ENCODE measurements at regions of chr17 and their contacts with region 1.

Region 1: GRCh38 chr17:57833179-57833939 is 16.5 kb downstream of the MRPS23 start:
- DNase-seq: peak; percentile 64 to 80 (median 76)
- ATAC-seq: peak; percentile 63 to 87 (median 81)
- H3K4me3 ChIP-seq: peak overlapping the region in 10 of 12 donors; percentile 24 to 58 (median 48)
- H3K27ac ChIP-seq: peak overlapping the region; percentile 58 to 95 (median 82)
- H3K4me1 ChIP-seq: peaks cover 0 to 46% (median 15%) of the 10 kb centered on the region in 12 donors
- H3K27me3 ChIP-seq: no peaks in the 10 kb centered on the region
- CTCF ChIP-seq: peak; percentile 85 to 97 (median 91)
- POLR2A ChIP-seq: no peak

Region 2: GRCh38 chr17:57121338-57122042 is 711.9 kb before region 1 on chr17:
- intact Hi-C with region 1: loop called in 3 of 10 experiments (anchors 5 to 10 kb)
- DNase-seq: peak in 1 of 5 donors; percentile 41
- ATAC-seq: peak; percentile 19 to 57 (median 47)
- H3K4me3 ChIP-seq: no peak overlapping the region
- H3K27ac ChIP-seq: peak overlapping the region in 2 of 12 donors; percentile 14 to 41
- H3K4me1 ChIP-seq: peaks cover 0 to 18% (median 0%) of the 10 kb centered on the region in 12 donors
- H3K27me3 ChIP-seq: no peaks in the 10 kb centered on the region
- CTCF ChIP-seq: peak in 11 of 12 donors; percentile 12 to 61 (median 45)
- POLR2A ChIP-seq: no peak

Region 3: DNA sequence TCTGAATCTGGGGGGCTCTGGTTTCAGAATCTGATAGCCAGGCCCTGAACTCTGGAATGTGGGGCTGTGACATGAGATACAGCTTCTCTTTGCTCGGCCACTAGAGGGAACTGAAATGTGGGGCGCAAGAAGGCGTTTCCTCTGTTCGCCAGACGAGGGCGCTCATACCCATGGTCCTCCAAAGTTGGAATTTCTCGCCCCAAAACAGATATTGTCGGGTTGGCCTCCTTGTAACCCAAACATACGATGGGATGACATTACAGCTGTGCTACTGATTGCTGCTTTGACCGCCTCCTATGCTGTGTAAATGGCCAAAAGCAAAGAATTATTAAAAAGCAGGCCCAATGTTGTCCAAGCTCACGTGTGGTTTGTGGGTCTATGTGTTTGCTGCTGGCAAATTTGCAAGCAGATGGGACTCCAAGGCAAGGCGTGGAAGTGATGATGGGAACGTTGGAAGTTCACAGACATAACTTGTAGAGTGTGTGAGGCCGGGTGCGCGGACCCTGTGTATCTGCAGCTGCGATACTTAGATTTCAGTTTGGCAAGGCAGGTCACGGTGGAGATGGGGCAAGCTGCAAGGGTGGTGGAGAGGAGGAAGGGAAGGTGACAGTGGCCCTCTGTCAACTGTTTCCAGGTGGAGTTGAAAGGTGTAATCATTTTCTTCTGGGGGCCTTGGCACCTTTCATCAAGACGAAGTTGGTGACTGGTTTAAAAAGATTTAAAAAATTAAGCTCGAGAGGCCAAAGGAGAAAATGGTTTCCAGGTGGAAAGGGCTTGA is 590.0 kb before region 1 on chr17:
- intact Hi-C with region 1: loop called in 3 of 10 experiments (anchors 5 to 10 kb)
- DNase-seq: peak; percentile 38 to 73 (median 60)
- ATAC-seq: peak; percentile 58 to 85 (median 74)
- H3K4me3 ChIP-seq: no peak overlapping the region
- H3K27ac ChIP-seq: peak overlapping the region in 6 of 12 donors; percentile 16 to 67 (median 41)
- H3K4me1 ChIP-seq: peaks cover 0 to 17% (median 12%) of the 10 kb centered on the region in 12 donors
- H3K27me3 ChIP-seq: peaks cover 0 to 4% (median 0%) of the 10 kb centered on the region in 9 donors
- CTCF ChIP-seq: peak; percentile 95 to 99 (median 97)
- POLR2A ChIP-seq: no peak

Region 4: DNA sequence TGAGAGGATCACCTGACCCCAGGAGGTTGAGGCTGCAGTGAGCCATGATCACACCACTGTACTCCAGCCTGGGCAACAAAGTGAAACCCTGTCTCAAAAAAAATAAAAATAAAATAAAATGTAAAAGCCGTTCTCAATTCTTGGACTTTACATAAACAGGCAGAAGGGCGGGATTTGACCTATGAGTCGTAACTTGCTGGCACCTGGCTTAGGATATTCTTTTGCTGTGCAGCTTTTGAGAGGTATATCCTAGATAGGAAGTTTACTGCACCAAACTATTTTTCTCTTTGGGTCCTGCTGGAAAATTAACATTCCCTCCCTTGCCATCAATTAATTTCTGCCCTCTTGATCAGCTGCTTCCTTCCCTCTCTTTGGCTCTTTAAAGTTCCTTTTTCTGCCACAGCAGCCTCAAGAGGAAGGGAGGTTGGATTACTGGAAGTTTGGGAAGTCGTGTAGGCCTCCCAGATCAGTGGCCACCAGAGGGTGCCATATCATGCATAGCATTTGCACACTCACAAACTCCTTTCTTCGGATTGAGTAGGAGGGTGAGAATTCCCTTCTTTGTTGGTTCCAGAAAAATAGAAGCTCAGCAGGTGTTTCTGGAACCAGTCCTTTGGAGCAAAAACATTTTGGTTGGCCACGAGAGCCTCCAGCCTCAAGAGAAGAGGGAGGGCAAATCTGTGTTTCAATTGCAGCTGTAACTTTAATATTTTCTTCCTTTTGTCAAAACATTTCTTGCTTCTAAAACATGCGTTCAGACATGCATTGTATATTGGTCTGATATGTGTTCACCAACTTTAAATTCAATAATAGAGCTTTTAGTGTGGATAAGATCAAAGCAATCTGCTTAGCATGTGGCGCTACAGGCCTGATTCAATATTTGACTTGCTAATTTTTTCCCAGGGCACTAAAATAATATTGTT is 235.6 kb before region 1 on chr17:
- intact Hi-C with region 1: loop called in 4 of 10 experiments (anchors 5 to 10 kb)
- DNase-seq: peak in 4 of 5 donors; percentile 72 to 80 (median 76)
- ATAC-seq: peak in 3 of 4 donors; percentile 40 to 79 (median 76)
- H3K4me3 ChIP-seq: no peak overlapping the region
- H3K27ac ChIP-seq: peak overlapping the region in 5 of 12 donors; percentile 30 to 84 (median 49)
- H3K4me1 ChIP-seq: peaks cover 0 to 63% (median 24%) of the 10 kb centered on the region in 12 donors
- H3K27me3 ChIP-seq: no peaks in the 10 kb centered on the region
- CTCF ChIP-seq: peak; percentile 76 to 92 (median 85)
- POLR2A ChIP-seq: no peak

Region 5: GRCh38 chr17:57671667-57672632 is 161.4 kb before region 1 on chr17:
- intact Hi-C with region 1: loop called in 3 of 10 experiments (anchors 5 to 10 kb)
- DNase-seq: peak; percentile 80 to 87 (median 82)
- ATAC-seq: peak; percentile 78 to 91 (median 88)
- H3K4me3 ChIP-seq: no peak overlapping the region
- H3K27ac ChIP-seq: peak overlapping the region in 2 of 12 donors; percentile 8 to 35
- H3K4me1 ChIP-seq: peaks cover 0 to 28% (median 10%) of the 10 kb centered on the region in 12 donors
- H3K27me3 ChIP-seq: no peaks in the 10 kb centered on the region
- CTCF ChIP-seq: peak; percentile 87 to 97 (median 96)
- POLR2A ChIP-seq: no peak

Region 6: GRCh38 chr17:57785022-57785421 is 48.3 kb before region 1 on chr17:
- intact Hi-C with region 1: loop called in 1 of 10 experiments (anchors 1 kb)
- DNase-seq: peak; percentile 60 to 80 (median 72)
- ATAC-seq: peak in 3 of 4 donors; percentile 64 to 72 (median 71)
- H3K4me3 ChIP-seq: no peak overlapping the region
- H3K27ac ChIP-seq: peak overlapping the region in 8 of 12 donors; percentile 6 to 68 (median 46)
- H3K4me1 ChIP-seq: peaks cover 0 to 42% (median 23%) of the 10 kb centered on the region in 12 donors
- H3K27me3 ChIP-seq: peaks cover 0 to 6% (median 0%) of the 10 kb centered on the region in 9 donors
- CTCF ChIP-seq: no peak
- POLR2A ChIP-seq: no peak